PC-9 (cell line): ENCODE measurements at regions of chr6 and their contacts with region 1.

Region 1: GRCh38 chr6:83047065-83047754 is 18.4 kb downstream of the UBE3D start:
- DNase-seq: peak; percentile 69 to 71
- H3K4me3 ChIP-seq: no peak overlapping the region
- H3K27ac ChIP-seq: no peak overlapping the region
- H3K4me1 ChIP-seq: no peaks in the 10 kb centered on the region
- H3K27me3 ChIP-seq: no peaks in the 10 kb centered on the region
- CTCF ChIP-seq: no peak

Region 2: DNA sequence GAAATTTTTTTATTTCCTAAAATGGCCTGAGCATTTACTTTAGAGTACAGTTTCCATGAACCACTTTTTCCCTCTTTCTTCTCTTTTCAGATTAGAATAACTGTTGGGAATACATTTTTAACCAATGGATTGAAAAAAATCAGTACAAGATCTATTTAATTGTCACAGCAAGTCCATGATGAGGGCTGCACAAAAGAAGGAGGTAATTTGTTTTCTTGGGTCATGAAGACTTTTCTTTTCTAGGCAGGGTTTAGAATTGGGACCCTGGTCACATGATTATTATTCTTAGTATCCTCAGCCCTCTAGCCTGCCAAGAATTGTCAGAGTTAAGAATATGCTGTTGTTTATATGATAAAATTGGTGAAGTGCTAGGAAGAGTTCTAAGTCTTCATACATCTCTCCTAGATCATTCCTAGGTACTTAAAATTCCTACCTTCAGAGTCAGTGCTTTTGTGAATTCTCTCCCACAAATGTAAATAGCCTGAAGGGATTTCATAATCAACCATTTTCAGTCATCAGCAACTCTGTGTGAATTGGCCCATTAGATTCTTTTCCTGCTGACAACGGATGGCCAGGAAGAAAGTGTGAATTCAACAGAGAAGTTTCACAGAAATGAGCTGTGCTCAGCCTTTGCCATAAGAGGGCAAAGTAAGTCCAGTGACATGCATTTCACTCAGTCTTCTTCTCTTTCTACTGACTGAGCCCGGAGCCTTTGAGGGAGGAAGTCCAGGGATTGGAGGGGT is 716.0 kb before region 1 on chr6:
- CTCF ChIA-PET with region 1: interaction called, 13 read pairs
- POLR2A ChIA-PET with region 1: no interaction called
- intact Hi-C with region 1: no loop called
- DNase-seq: peak; percentile 30 to 89
- H3K4me3 ChIP-seq: no peak overlapping the region
- H3K27ac ChIP-seq: peak overlapping the region; percentile 24
- H3K4me1 ChIP-seq: peaks cover 21% of the 10 kb centered on the region
- H3K27me3 ChIP-seq: no peaks in the 10 kb centered on the region
- CTCF ChIP-seq: no peak

Region 3: GRCh38 chr6:82396964-82397751 is 650.1 kb before region 1 on chr6:
- CTCF ChIA-PET with region 1: no interaction called
- POLR2A ChIA-PET with region 1: interaction called, 3 read pairs
- intact Hi-C with region 1: loop called (anchors 10 kb)
- DNase-seq: peak; percentile 54 to 93
- H3K4me3 ChIP-seq: peak overlapping the region; percentile 35; the same call in 1 of the 2 replicates
- H3K27ac ChIP-seq: peak overlapping the region; percentile 98
- H3K4me1 ChIP-seq: peaks cover 37% of the 10 kb centered on the region
- H3K27me3 ChIP-seq: no peaks in the 10 kb centered on the region
- CTCF ChIP-seq: no peak

Region 4: GRCh38 chr6:82875573-82876185 is 171.5 kb before region 1 on chr6:
- CTCF ChIA-PET with region 1: no interaction called
- POLR2A ChIA-PET with region 1: interaction called, 10 read pairs
- intact Hi-C with region 1: loop called (anchors 2 kb)
- DNase-seq: peak; percentile 56 to 84
- H3K4me3 ChIP-seq: no peak overlapping the region
- H3K27ac ChIP-seq: peak overlapping the region; percentile 43
- H3K4me1 ChIP-seq: peaks cover 23% of the 10 kb centered on the region
- H3K27me3 ChIP-seq: no peaks in the 10 kb centered on the region
- CTCF ChIP-seq: no peak

Region 5: GRCh38 chr6:82954937-82955577 is 92.2 kb before region 1 on chr6:
- CTCF ChIA-PET with region 1: interaction called, 3 read pairs
- POLR2A ChIA-PET with region 1: no interaction called
- intact Hi-C with region 1: loop called (anchors 5 kb)
- DNase-seq: no peak
- H3K4me3 ChIP-seq: no peak overlapping the region
- H3K27ac ChIP-seq: no peak overlapping the region
- H3K4me1 ChIP-seq: no peaks in the 10 kb centered on the region
- H3K27me3 ChIP-seq: no peaks in the 10 kb centered on the region
- CTCF ChIP-seq: no peak

Region 6: DNA sequence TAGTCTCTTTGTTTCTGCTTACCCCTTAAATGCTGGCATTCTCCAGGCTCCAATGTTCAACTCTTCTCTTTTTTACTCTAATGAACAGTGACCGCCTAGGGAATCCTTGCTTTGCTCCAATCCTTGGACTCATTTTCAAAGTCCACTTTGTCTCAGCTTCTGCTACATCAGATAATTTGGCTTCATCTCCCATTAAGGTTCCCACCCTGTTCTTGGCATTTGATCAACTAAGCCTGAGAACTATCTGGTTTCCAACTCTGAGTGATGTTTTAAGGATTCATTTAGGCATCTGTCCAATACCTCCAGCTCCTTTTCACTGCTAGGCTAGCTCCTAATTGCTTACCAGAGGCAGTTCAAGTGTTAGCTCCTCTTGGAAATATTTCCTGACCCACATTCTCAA is 318.7 kb after region 1 on chr6:
- CTCF ChIA-PET with region 1: no interaction called
- POLR2A ChIA-PET with region 1: no interaction called
- intact Hi-C with region 1: no loop called
- DNase-seq: no peak
- H3K4me3 ChIP-seq: no peak overlapping the region
- H3K27ac ChIP-seq: no peak overlapping the region
- H3K4me1 ChIP-seq: no peaks in the 10 kb centered on the region
- H3K27me3 ChIP-seq: no peaks in the 10 kb centered on the region
- CTCF ChIP-seq: no peak

Region 7: GRCh38 chr6:83815631-83816272 is 768.5 kb after region 1 on chr6:
- CTCF ChIA-PET with region 1: no interaction called
- POLR2A ChIA-PET with region 1: no interaction called
- intact Hi-C with region 1: no loop called
- DNase-seq: peak in 1 of 2 experiments; percentile 57
- H3K4me3 ChIP-seq: no peak overlapping the region
- H3K27ac ChIP-seq: no peak overlapping the region
- H3K4me1 ChIP-seq: peaks cover 8% of the 10 kb centered on the region; the same call in 1 of the 2 replicates
- H3K27me3 ChIP-seq: no peaks in the 10 kb centered on the region
- CTCF ChIP-seq: no peak